ENCODE measurements at regions of chr11 and their contacts with region 1.

Region 1: DNA sequence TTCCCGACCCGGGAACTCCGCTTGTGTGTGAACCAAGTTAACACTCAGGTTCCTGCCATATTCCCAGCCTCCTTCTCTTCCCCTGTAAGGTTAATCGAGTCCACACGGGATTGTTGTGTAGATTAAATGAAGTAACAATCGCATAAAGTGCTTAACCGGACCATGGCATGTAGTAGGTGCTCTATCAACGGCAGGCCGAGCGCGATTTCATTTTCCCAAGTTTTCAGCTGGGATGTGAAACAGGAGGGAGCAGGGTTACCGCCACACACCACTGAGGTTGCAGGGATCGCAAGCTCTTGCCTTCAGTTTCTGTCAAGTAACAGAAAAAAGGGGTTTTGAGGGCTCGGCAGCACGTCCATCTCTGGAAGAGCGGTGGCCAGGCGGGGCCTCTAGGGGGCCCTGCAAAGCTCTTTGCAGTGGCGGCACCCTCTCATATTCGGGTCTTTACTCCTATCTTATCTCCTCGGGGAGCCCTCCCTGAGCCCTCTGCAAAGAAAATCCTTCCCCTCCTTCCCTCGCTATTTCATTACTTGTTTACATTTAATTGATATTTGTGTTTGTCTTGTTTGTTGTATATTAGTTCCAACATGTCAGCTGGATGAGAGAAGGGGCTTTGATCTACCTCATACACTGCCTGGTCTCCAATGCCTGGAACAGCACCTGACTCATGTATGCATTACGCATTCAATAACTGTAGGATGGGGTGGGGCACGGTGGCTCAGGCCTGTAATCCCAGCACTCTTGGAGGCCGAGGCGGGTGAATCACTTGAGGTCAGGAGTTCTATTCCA is 818 bp upstream of the PLEKHA7 start:
- DNase-seq: peak; percentile 75
- ATAC-seq: peak; percentile 74
- H3K4me3 ChIP-seq: peak overlapping the region; percentile 65 to 69
- H3K27ac ChIP-seq: no peak overlapping the region
- H3K4me1 ChIP-seq: peaks cover 15 to 28% of the 10 kb centered on the region in 2 experiments
- H3K27me3 ChIP-seq: no peaks in the 10 kb centered on the region
- CTCF ChIP-seq: peak; percentile 19 to 87 (median 69); a peak in 4 of 6 replicates
- POLR2A ChIP-seq: no peak
- RAD21 ChIP-seq: peak; percentile 31; the same call in 1 of the 2 replicates

Region 2: GRCh38 chr11:16958833-16959232 is 56.2 kb before region 1 on chr11:
- CTCF ChIA-PET with region 1: interaction called, 3 read pairs
- POLR2A ChIA-PET with region 1: no interaction called
- RAD21 ChIA-PET with region 1: interaction called in 1 of 2 experiments, 12 read pairs
- intact Hi-C with region 1: no loop called
- DNase-seq: no peak
- ATAC-seq: no peak
- H3K4me3 ChIP-seq: no peak overlapping the region
- H3K27ac ChIP-seq: no peak overlapping the region
- H3K4me1 ChIP-seq: peaks cover 15 to 16% of the 10 kb centered on the region in 2 experiments
- H3K27me3 ChIP-seq: no peaks in the 10 kb centered on the region
- CTCF ChIP-seq: no peak
- POLR2A ChIP-seq: no peak
- RAD21 ChIP-seq: no peak

Measured in HCT116 (cell line).